ENCODE measurements at regions of chr15 and their contacts with region 1.

Region 1: DNA sequence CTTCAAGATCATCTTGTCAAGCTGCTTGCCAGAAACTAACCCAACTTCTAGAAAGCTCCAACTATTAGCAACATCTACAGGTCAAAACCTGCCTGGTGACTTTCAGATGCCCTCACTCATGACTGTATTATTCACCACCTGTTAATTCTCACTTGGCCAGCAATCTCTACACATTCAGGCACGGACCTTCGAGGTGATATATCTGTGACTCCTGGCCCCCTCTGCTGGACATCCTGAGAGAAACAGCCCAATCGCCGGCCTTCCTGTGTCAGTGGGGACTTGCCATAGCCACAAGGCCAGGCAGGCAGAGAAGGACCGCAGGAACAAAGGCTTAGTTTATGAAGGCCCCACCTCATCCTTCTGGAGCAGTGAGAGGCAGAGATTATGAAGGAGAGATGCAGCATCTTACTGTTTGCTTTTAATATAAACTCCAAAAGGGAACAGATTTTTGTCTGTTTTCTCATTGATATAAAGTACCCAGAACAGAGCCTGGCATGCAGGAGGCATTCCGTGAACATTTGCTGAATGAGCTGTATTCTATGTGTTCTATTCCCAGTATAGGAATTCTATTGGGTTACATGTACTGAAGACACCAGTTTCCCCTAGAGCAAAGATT is 24.4 kb upstream of the OCA2 start:
- DNase-seq: peak in 1 of 2 donors; percentile 64
- ATAC-seq: peak; percentile 51 to 82
- H3K4me3 ChIP-seq: no peak overlapping the region
- H3K27ac ChIP-seq: no peak overlapping the region
- H3K4me1 ChIP-seq: no peaks in the 10 kb centered on the region
- H3K27me3 ChIP-seq: no peaks in the 10 kb centered on the region
- CTCF ChIP-seq: peak; percentile 28 to 57 (median 47)
- POLR2A ChIP-seq: no peak

Region 2: DNA sequence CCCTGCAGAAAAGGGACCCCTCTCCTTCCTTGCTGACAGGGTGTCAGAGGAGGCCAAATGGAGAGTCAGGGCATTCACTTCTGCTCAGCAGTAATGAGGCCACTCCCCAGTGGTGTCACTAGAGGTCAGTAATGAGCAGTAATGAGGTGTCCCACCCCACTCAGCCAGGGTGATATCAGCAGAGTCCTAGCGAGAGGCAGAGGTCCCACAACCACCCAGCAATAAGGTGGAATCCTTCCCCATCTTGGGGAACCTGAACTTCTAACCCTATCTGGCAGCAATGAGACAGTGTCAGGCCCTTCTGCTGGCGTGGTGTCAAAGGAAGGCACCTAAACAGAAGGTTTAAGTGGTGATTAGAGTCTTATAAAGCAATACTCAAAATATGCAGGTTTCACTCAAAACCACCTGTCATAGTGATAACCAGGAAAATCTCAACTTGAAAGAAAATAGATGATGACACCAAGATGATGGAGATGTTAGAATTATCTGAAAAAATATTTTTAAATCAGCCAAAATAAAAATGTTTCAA is 37.3 kb before region 1 on chr15:
- in situ Hi-C with region 1: no loop called
- intact Hi-C with region 1: loop called (anchors 1 kb)
- DNase-seq: no peak
- ATAC-seq: peak; percentile 77 to 90
- H3K4me3 ChIP-seq: no peak overlapping the region
- H3K27ac ChIP-seq: no peak overlapping the region
- H3K4me1 ChIP-seq: no peaks in the 10 kb centered on the region
- H3K27me3 ChIP-seq: peaks cover 0 to 11% (median 0%) of the 10 kb centered on the region in 3 donors
- CTCF ChIP-seq: peak in 4 of 5 experiments; percentile 13 to 66 (median 48)
- POLR2A ChIP-seq: no peak